Activated B cell treated with CpG ODN at 0.5 μM for 24 hours (primary cell): ENCODE measurements at regions of chr15 and their contacts with region 1.

Region 1: DNA sequence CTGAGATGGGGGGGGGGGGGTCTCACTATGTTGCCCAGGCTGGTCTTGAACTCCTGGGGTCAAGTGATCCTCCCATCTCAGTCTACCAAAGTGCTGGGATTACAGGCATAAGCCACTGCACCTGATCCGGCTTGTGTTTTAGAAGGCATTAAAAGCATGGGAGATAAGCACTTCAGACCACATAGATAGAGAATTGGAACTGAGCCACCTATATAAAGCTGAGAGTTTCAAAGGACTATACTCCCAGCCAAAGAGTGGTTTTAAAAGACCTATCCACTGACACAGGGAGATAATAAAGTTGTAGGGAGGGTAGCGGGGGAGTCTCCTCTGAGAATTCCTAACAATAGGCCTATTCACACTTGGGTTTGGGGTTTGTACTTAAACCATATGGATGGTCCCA is 34.8 kb downstream of the DENND4A start:
- DNase-seq: no peak
- ATAC-seq: no peak
- H3K4me3 Mint-ChIP-seq: no peak overlapping the region
- H3K27ac Mint-ChIP-seq: peak overlapping the region; percentile 18
- H3K4me1 Mint-ChIP-seq: peaks cover 40% of the 10 kb centered on the region
- H3K27me3 Mint-ChIP-seq: no peaks in the 10 kb centered on the region
- CTCF ChIP-seq: no peak

Region 2: DNA sequence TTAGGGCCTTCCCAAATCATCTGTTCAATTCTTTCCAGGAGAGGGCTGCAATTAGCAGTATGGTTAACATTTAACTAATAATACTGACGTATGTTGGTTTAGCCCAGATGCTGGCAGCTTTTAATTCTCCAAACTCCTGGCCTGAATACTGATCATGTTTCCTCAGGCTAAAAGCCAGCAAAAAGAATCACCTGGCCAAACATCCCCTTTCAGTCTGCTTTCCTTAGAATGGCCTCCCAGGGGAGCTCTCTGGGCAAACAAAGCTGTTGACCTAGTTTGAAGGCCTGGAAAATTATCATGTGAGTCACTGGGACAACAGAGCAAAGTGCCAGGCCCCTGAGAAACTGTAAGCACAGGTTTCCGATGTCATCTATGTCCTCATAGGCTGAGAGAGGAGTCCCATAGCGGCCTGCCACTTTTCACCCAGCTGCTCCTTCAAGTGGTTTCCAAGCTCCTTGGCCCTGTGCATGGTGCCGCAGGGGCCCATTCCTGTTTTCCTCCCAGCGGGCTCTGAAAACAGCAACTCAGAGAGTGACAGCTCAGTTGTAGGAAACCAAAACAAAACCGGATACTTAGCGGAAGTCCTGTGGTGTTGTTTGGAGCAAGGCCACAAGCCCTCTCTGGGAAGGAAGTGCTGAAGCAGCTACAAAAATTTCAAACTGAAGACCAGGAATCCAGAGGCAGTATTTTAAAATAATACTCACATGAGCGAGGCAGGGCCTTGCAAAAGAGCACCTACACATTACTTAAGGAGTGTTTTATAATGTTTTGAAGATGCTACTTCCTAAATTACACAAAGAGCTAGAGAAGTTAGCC is 75.5 kb after region 1 on chr15:
- CTCF ChIA-PET with region 1: no interaction called
- POLR2A ChIA-PET with region 1: interaction called, 3 read pairs
- intact Hi-C with region 1: loop called (anchors 5 kb)
- DNase-seq: peak; percentile 38
- ATAC-seq: peak; percentile 59
- H3K4me3 Mint-ChIP-seq: peak overlapping the region; percentile 68
- H3K27ac Mint-ChIP-seq: peak overlapping the region; percentile 86
- H3K4me1 Mint-ChIP-seq: peaks cover 64% of the 10 kb centered on the region
- H3K27me3 Mint-ChIP-seq: no peaks in the 10 kb centered on the region
- CTCF ChIP-seq: no peak